Panc1 (cell line): ENCODE measurements at regions of chr5 and their contacts with region 1.

Region 1: DNA sequence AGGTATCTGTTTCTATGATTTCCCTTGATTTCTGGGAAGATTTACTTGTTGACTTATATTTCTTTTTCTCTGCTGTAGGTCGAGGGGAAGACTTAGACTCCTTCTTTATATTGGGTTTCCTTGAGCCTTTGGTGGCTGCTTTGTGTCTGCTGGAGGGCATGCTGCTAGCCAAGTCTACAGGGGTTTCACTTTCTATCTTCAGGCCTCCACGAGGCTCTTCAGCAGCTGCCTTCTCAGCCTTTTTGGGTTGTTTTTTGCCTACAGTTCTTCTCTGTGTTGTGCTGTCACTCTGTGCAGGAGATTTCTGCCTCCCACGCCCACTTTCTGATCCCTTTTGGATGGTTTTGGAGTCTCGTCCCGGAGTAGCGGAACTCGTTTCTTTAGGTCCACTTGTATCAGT is 23.2 kb downstream of the LEAP2 start:
- DNase-seq: no peak
- ATAC-seq: no peak
- H3K4me3 ChIP-seq: no peak overlapping the region
- H3K27ac ChIP-seq: no peak overlapping the region
- H3K4me1 ChIP-seq: no peaks in the 10 kb centered on the region
- H3K27me3 ChIP-seq: no peaks in the 10 kb centered on the region
- CTCF ChIP-seq: no peak

Region 2: DNA sequence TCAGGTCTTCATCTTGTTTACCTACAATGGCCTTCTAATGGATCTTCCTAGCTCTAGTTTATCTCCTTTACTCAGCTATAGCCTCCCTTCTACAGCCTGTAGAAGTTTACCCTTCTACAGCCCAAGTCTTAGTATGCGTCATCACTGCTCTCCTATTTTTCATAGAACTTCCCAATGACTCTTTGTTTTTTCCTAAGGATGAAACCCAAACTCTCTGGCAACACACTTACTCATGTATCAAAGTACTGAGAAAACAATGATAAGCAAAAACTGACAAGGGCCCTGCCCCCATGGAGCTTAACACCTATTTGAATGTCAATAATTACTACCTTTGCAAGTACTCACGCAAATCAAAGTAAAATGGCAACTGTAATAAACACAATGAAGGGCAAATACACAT is 10.5 kb after region 1 on chr5:
- CTCF ChIA-PET with region 1: no interaction called
- POLR2A ChIA-PET with region 1: interaction called, 14 read pairs
- in situ Hi-C with region 1: no loop called
- intact Hi-C with region 1: no loop called
- DNase-seq: no peak
- ATAC-seq: no peak
- H3K4me3 ChIP-seq: no peak overlapping the region
- H3K27ac ChIP-seq: no peak overlapping the region
- H3K4me1 ChIP-seq: no peaks in the 10 kb centered on the region
- H3K27me3 ChIP-seq: no peaks in the 10 kb centered on the region
- CTCF ChIP-seq: no peak